AG04449 (cell line): ENCODE measurements at regions of chr17 and their contacts with region 1.

Region 1: GRCh38 chr17:42388381-42389134 is at the start of gene STAT3:
- DNase-seq: peak; percentile 98
- H3K4me3 ChIP-seq: peak within 1 kb of the TSS; percentile 96
- CTCF ChIP-seq: no peak

Region 2: GRCh38 chr17:42399948-42400843 is 11.6 kb after region 1 on chr17:
- CTCF ChIA-PET with region 1: interaction called, 14 read pairs
- POLR2A ChIA-PET with region 1: interaction called, 5 read pairs
- DNase-seq: no peak
- H3K4me3 ChIP-seq: no peak overlapping the region
- CTCF ChIP-seq: no peak